Left colon (tissue), 2 donors: ENCODE measurements at regions of chr20 and their contacts with region 1.

Region 1: GRCh38 chr20:39874049-39874888 is 814.8 kb downstream of the MAFB start:
- DNase-seq: peak; percentile 50 to 76
- ATAC-seq: peak; percentile 84

Region 2: DNA sequence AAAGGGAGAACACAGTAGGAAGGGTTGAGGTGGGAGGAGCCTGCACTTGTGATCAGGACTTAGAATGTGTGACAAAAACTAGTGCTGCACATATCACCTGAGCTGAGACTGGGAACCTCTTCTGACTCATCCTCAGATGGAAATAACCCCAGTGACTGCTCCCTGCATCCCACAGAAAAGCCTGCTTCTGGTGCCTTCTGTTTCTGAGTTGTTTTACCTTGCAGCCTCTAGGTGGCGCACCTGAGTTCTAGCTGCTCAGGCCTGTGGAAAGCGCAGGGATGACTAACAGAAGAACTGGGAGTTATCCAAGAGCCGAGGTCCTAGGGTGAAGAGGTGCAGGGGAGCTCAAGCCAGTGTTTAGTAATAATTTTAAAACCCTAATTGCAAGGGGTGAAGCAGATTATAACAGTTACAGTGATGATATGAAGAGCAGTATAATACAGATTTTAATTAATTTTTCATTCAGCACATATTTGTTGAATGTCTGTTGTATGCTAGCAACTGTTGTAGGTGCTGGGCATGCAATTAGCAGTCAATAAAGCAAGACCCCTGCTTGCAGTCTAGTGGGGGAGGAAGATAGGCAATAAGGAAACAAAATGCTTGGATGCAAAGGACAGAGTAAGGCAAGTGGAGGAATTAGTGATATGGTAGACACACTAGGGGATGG is 609.6 kb before region 1 on chr20:
- intact Hi-C with region 1: loop called in 1 of 2 experiments (anchors 10 kb)
- DNase-seq: peak; percentile 32 to 49
- ATAC-seq: peak; percentile 60